A673 (cell line): ENCODE measurements at regions of chr2 and their contacts with region 1.

Region 1: GRCh38 chr2:105912081-105912480 is 167.4 kb downstream of the NCK2 start:
- DNase-seq: peak; percentile 23
- H3K4me3 ChIP-seq: no peak overlapping the region
- H3K27ac ChIP-seq: no peak overlapping the region
- H3K4me1 ChIP-seq: no peaks in the 10 kb centered on the region
- H3K27me3 ChIP-seq: peaks cover 4% of the 10 kb centered on the region
- CTCF ChIP-seq: no peak

Region 2: GRCh38 chr2:105678346-105678745 is 233.7 kb before region 1 on chr2:
- CTCF ChIA-PET with region 1: no interaction called
- POLR2A ChIA-PET with region 1: interaction called, 12 read pairs
- intact Hi-C with region 1: no loop called
- DNase-seq: no peak
- H3K4me3 ChIP-seq: no peak overlapping the region
- H3K27ac ChIP-seq: no peak overlapping the region
- H3K4me1 ChIP-seq: no peaks in the 10 kb centered on the region
- H3K27me3 ChIP-seq: peaks cover 24% of the 10 kb centered on the region
- CTCF ChIP-seq: no peak